ENCODE measurements at regions of chr2 and their contacts with region 1.

Region 1: GRCh38 chr2:196277002-196277401 is 105.6 kb upstream of the STK17B start:
- DNase-seq: peak in 24 of 35 experiments; percentile 16 to 76 (median 34)
- ATAC-seq: peak; percentile 43 to 58 (median 48)
- H3K4me3 ChIP-seq: no peak overlapping the region
- H3K4me3 Mint-ChIP-seq: peak overlapping the region in 1 of 3 donors; percentile 55
- H3K27ac ChIP-seq: peak overlapping the region; percentile 57
- H3K27ac Mint-ChIP-seq: peak overlapping the region; percentile 39 to 68
- H3K4me1 ChIP-seq: peaks cover 23 to 32% of the 10 kb centered on the region in 2 experiments
- H3K4me1 Mint-ChIP-seq: peaks cover 52 to 55% (median 52%) of the 10 kb centered on the region in 3 donors
- H3K27me3 ChIP-seq: no peaks in the 10 kb centered on the region
- H3K27me3 Mint-ChIP-seq: no peaks in the 10 kb centered on the region

Region 2: DNA sequence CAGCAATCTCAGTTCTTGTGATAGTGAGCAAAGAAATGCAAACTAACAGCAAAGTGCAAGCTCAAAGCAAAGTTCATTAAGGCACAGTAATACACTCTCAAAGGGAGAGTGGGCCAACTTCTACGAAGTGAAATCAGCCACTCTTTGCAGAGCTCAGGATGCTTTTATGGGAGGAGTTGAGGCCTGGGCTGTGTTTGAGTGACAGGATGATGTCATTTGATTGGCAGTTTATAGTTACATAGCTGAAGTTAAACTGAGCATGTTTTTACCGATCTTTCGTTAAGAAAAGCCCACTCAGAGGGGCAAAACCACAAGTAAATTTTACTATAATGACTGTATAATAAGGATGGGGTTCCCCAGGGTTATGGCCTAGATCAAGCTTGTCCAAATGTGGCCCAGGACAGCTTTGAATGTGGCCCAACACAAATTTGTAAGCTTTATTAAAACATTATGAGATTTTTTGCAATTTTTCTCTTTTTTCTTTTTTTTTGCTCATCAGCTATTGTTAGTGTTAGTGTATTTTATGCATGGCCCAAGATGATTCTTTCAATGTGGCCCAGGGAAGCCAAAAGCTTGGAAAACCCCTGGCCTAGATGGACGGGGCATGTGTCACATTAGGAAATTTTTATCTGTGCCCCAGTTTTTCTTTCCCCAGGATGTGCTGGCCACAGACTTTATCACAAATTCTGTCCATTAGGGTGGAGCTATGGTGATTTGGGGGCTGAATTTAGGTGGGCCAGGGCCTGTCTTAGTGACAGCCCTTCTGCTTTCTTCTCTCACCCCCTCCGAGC is 200.0 kb before region 1 on chr2:
- CTCF ChIA-PET with region 1: interaction called, 45 to 68 read pairs
- POLR2A ChIA-PET with region 1: interaction called in 1 of 2 experiments, 4 read pairs
- DNase-seq: no peak
- ATAC-seq: no peak
- H3K4me3 ChIP-seq: no peak overlapping the region
- H3K4me3 Mint-ChIP-seq: no peak overlapping the region
- H3K27ac ChIP-seq: no peak overlapping the region
- H3K27ac Mint-ChIP-seq: no peak overlapping the region
- H3K4me1 ChIP-seq: peaks cover 0 to 4% of the 10 kb centered on the region in 2 experiments
- H3K4me1 Mint-ChIP-seq: peaks cover 24 to 28% (median 27%) of the 10 kb centered on the region in 3 donors
- H3K27me3 ChIP-seq: no peaks in the 10 kb centered on the region
- H3K27me3 Mint-ChIP-seq: no peaks in the 10 kb centered on the region

Region 3: GRCh38 chr2:196171248-196171871 is 105.6 kb before region 1 on chr2 and contains the start of gene STK17B:
- CTCF ChIA-PET with region 1: interaction called, 4 to 11 read pairs
- POLR2A ChIA-PET with region 1: interaction called, 5 to 7 read pairs
- DNase-seq: peak; percentile 90 to 98 (median 97)
- ATAC-seq: peak; percentile 67 to 75 (median 70)
- H3K4me3 ChIP-seq: peak within 1 kb of the TSS; percentile 86 to 99
- H3K4me3 Mint-ChIP-seq: peak within 1 kb of the TSS; percentile 88 to 99 (median 98)
- H3K27ac ChIP-seq: peak within 1 kb of the TSS; percentile 93
- H3K27ac Mint-ChIP-seq: peak within 1 kb of the TSS; percentile 92 to 96
- H3K4me1 ChIP-seq: peaks cover 36 to 37% of the 10 kb centered on the region in 2 experiments
- H3K4me1 Mint-ChIP-seq: peaks cover 39 to 46% (median 41%) of the 10 kb centered on the region in 3 donors
- H3K27me3 ChIP-seq: no peaks in the 10 kb centered on the region
- H3K27me3 Mint-ChIP-seq: no peaks in the 10 kb centered on the region
- total RNA-seq, gene STK17B: 218 to 478 (median 248) TPM

Region 4: DNA sequence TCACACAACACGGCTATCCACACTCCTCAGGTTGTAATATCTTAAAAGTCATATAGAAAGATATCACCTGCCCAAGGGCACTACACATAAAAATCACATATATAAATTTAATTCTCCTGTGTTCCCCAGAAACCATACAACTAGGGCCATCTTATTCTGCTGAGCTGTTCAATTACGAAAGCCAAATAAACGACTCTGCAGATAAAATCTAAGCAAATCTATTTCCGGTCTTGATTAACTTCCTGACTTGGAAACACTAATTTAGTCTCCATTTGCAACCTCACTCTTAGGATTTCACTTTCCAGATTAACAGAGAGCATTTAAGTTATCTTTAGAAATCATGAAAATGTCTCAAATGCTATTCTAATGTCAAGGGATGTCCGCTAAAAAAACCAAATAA is 81.7 kb before region 1 on chr2:
- CTCF ChIA-PET with region 1: interaction called in 1 of 2 experiments, 5 read pairs
- POLR2A ChIA-PET with region 1: interaction called, 5 to 11 read pairs
- DNase-seq: peak in 1 of 35 experiments; percentile 29
- ATAC-seq: peak in 1 of 4 experiments; percentile 30
- H3K4me3 ChIP-seq: no peak overlapping the region
- H3K4me3 Mint-ChIP-seq: peak overlapping the region; percentile 24 to 60 (median 49)
- H3K27ac ChIP-seq: no peak overlapping the region
- H3K27ac Mint-ChIP-seq: peak overlapping the region; percentile 76 to 79
- H3K4me1 ChIP-seq: peaks cover 8 to 18% of the 10 kb centered on the region in 2 experiments
- H3K4me1 Mint-ChIP-seq: peaks cover 52 to 72% (median 64%) of the 10 kb centered on the region in 3 donors
- H3K27me3 ChIP-seq: no peaks in the 10 kb centered on the region
- H3K27me3 Mint-ChIP-seq: no peaks in the 10 kb centered on the region

Region 5: GRCh38 chr2:196220671-196221070 is 56.3 kb before region 1 on chr2:
- CTCF ChIA-PET with region 1: interaction called, 12 to 14 read pairs
- POLR2A ChIA-PET with region 1: interaction called, 3 read pairs
- DNase-seq: peak in 16 of 35 experiments; percentile 2 to 69 (median 26)
- ATAC-seq: peak; percentile 74 to 98 (median 86)
- H3K4me3 ChIP-seq: no peak overlapping the region
- H3K4me3 Mint-ChIP-seq: peak overlapping the region in 1 of 3 donors; percentile 30
- H3K27ac ChIP-seq: no peak overlapping the region
- H3K27ac Mint-ChIP-seq: peak overlapping the region; percentile 65 to 86
- H3K4me1 ChIP-seq: peaks cover 8 to 13% of the 10 kb centered on the region in 2 experiments
- H3K4me1 Mint-ChIP-seq: peaks cover 77 to 82% (median 77%) of the 10 kb centered on the region in 3 donors
- H3K27me3 ChIP-seq: no peaks in the 10 kb centered on the region
- H3K27me3 Mint-ChIP-seq: no peaks in the 10 kb centered on the region

Region 6: GRCh38 chr2:196239622-196240587 is 37.1 kb before region 1 on chr2:
- CTCF ChIA-PET with region 1: interaction called, 13 to 24 read pairs
- POLR2A ChIA-PET with region 1: interaction called, 4 read pairs
- DNase-seq: peak; percentile 41 to 90 (median 80)
- ATAC-seq: peak; percentile 86 to 94 (median 90)
- H3K4me3 ChIP-seq: peak overlapping the region; percentile 8 to 16
- H3K4me3 Mint-ChIP-seq: peak overlapping the region; percentile 67 to 75 (median 73)
- H3K27ac ChIP-seq: peak overlapping the region; percentile 85
- H3K27ac Mint-ChIP-seq: peak overlapping the region; percentile 95 to 98
- H3K4me1 ChIP-seq: peaks cover 57 to 63% of the 10 kb centered on the region in 2 experiments
- H3K4me1 Mint-ChIP-seq: peaks cover 82 to 88% (median 87%) of the 10 kb centered on the region in 3 donors
- H3K27me3 ChIP-seq: no peaks in the 10 kb centered on the region
- H3K27me3 Mint-ChIP-seq: no peaks in the 10 kb centered on the region

Region 7: DNA sequence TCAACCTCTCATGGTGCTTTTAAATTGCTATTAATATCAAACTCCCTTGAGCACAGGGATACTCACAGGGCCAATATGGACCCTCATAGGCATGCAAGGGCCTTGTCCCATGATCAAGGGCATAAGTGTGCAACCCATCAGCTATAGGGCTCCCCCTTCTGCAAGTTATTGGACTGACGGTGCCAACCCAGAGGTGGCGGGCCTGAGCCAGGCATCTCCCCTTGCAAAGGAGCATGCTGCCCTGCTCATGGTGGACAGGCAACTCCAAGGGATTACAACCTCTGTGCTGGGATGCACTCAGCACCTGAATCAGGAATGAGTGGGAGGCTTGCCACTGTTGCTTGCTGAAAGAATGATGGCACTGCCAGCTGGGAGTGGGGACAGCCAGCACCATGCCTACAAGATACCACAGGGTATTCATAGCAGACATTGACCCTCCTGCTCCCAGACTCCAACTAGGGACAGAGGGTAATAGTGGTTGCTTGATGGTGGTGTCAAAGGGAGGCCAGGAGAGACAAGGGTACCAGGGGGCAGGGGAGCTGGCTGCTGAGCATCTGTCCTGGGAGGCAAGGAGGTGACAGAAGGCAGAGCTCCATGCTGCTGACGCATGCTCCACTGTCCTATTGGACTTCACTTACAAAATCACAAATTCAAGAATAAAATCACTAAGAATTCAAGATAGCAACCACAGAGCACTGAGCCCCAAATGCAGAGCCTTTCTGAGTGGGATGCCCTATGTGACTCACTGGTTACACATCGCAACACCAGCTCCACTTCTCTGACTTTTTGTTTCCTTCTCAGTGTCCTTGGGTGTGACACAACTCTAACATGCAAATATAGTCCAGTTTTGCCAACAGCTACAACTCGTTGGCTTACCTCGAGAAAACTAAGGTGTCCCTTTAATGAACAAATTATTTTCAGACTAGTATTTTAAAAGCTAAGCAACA is 205.4 kb after region 1 on chr2:
- CTCF ChIA-PET with region 1: no interaction called
- POLR2A ChIA-PET with region 1: no interaction called
- DNase-seq: no peak
- ATAC-seq: no peak
- H3K4me3 ChIP-seq: no peak overlapping the region
- H3K4me3 Mint-ChIP-seq: no peak overlapping the region
- H3K27ac ChIP-seq: no peak overlapping the region
- H3K27ac Mint-ChIP-seq: no peak overlapping the region
- H3K4me1 ChIP-seq: no peaks in the 10 kb centered on the region
- H3K4me1 Mint-ChIP-seq: no peaks in the 10 kb centered on the region
- H3K27me3 ChIP-seq: peaks cover 3 to 4% of the 10 kb centered on the region in 2 experiments
- H3K27me3 Mint-ChIP-seq: peaks cover 24 to 34% of the 10 kb centered on the region in 2 donors

Region 8: DNA sequence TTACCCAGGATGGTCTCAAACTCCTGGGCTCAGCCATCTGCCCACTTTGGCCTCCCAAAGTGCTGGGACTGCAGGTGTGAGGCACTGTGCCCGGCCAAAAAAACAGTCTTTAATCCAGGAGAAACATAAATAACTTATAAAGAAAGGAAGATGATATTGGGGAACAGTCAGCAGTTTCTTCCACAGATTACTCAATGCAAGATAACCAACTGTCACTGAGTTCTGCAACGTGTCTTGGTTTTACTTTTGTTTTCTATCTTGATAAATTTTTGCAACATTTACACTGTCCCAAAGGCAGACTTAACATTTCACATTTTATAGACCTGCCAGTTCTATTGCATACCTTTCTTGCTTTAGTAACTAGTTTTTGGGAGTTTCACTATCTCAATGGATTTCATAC is 962.4 kb after region 1 on chr2:
- CTCF ChIA-PET with region 1: no interaction called
- POLR2A ChIA-PET with region 1: no interaction called
- DNase-seq: peak in 1 of 35 experiments; percentile 53
- ATAC-seq: peak in 3 of 4 experiments; percentile 27 to 33 (median 30)
- H3K4me3 ChIP-seq: peak overlapping the region; percentile 23 to 53
- H3K4me3 Mint-ChIP-seq: peak overlapping the region; percentile 74 to 80 (median 78)
- H3K27ac ChIP-seq: peak overlapping the region; percentile 95
- H3K27ac Mint-ChIP-seq: peak overlapping the region; percentile 93 to 98
- H3K4me1 ChIP-seq: peaks cover 68 to 85% of the 10 kb centered on the region in 2 experiments
- H3K4me1 Mint-ChIP-seq: peaks cover 86 to 90% (median 88%) of the 10 kb centered on the region in 3 donors
- H3K27me3 ChIP-seq: no peaks in the 10 kb centered on the region
- H3K27me3 Mint-ChIP-seq: no peaks in the 10 kb centered on the region

Measured in T-cell (primary cell).